Psoas muscle (tissue), 8 donors: ENCODE measurements at regions of chr12 and their contacts with region 1.

Region 1: DNA sequence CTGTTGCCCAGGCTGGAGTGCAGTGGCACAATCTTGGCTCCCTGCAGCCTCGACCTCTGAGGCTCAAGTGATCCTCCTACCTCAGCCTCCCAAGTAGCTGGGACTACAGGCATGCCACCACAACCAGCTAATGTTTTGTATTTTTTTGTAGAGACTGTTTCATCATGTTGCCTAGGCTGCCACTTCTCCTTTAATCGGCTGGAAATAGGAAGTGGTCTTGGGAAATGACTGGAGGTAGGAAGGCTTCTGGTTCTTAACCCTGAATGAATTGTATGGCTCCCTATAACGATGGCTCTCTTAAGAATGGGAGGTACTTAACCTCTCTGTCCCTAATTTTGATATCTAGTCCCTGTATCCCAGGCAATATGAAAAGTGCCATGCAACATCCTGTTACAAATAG is 113.9 kb upstream of the USP15 start:
- DNase-seq: no peak
- ATAC-seq: no peak
- H3K4me3 ChIP-seq: no peak overlapping the region
- H3K27ac ChIP-seq: no peak overlapping the region
- H3K4me1 ChIP-seq: no peaks in the 10 kb centered on the region
- H3K27me3 ChIP-seq: no peaks in the 10 kb centered on the region
- CTCF ChIP-seq: no peak

Region 2: DNA sequence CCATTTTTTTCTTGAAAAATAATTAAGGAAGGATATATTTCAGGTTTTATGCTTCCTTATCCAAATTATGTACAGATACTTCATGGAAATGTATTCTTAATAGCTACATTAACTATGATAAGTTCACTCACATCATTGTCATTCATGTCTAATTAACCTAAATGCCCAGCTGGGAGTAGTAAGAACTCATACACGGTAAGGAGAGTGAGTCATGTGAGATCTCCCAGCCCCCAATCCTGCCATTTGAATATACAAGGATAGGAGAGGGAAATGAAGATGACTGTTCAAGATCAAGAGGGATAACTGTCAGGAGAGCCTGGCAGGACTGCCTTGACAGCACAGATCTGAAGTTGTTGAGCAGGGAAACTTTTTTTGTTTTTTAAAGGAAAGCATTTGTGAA is 229.5 kb before region 1 on chr12:
- intact Hi-C with region 1: no loop called
- DNase-seq: no peak
- ATAC-seq: no peak
- H3K4me3 ChIP-seq: no peak overlapping the region
- H3K27ac ChIP-seq: no peak overlapping the region
- H3K4me1 ChIP-seq: no peaks in the 10 kb centered on the region
- H3K27me3 ChIP-seq: no peaks in the 10 kb centered on the region
- CTCF ChIP-seq: no peak

Region 3: GRCh38 chr12:62021811-62022210 is 124.5 kb before region 1 on chr12:
- intact Hi-C with region 1: no loop called
- DNase-seq: no peak
- ATAC-seq: no peak
- H3K4me3 ChIP-seq: no peak overlapping the region
- H3K27ac ChIP-seq: no peak overlapping the region
- H3K4me1 ChIP-seq: no peaks in the 10 kb centered on the region
- H3K27me3 ChIP-seq: no peaks in the 10 kb centered on the region
- CTCF ChIP-seq: no peak

Region 4: DNA sequence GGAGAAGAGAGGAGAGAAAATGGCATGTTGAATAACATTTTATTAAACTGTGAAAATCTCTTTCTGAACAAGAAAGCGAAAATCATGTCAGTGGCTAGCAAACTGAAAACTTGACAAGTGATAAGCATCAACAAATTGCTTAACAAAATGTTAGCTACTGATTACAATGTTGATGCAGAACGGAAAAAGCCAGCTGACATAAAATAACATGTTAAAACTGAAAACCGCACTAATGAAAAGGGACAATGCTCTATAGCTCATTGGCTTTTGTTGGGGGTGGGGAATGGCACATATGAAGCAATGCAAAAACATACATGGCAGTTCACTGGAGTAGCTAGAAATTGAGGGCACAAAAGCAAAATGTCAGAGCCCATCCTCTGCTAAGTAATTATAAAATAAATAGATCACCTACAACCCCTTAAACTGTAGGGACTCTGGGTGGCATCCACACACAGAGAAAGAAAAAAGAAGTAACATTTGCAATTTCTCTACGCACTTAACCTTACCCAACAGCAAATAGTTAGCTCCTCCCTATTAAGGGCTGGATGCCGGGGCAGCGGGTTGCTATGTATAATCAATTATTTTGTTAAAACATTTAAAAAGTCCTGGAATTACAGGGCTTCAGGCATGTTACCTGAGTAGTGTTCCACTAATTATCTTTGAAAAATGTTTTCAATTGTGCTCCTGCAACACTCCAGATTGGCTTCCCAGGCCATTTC is 15.3 kb before region 1 on chr12:
- intact Hi-C with region 1: loop called in 1 of 2 experiments (anchors 1 kb)
- DNase-seq: no peak
- ATAC-seq: no peak
- H3K4me3 ChIP-seq: no peak overlapping the region
- H3K27ac ChIP-seq: no peak overlapping the region
- H3K4me1 ChIP-seq: no peaks in the 10 kb centered on the region
- H3K27me3 ChIP-seq: no peaks in the 10 kb centered on the region
- CTCF ChIP-seq: no peak

Region 5: DNA sequence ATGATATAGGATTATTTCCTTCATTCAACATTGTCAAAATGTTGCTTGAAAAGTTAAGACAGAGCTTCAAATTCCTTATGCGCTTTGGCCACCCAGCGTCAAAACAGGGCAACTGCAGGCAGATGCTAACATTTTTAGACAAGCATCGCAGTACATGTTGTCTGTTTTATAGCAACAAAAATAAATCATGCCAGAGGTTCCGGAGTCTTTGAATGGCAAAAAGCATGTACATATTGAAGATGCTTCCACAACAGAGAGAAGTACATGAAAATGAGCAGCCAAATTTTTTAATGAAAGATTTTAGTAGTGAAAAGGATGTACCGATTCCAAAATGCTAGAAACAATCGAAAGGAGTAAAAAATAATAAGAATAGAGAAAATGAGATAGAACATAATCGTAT is 64.1 kb after region 1 on chr12:
- intact Hi-C with region 1: no loop called
- DNase-seq: peak; percentile 18 to 52
- ATAC-seq: peak in 1 of 4 donors; percentile 52
- H3K4me3 ChIP-seq: no peak overlapping the region
- H3K27ac ChIP-seq: no peak overlapping the region
- H3K4me1 ChIP-seq: no peaks in the 10 kb centered on the region
- H3K27me3 ChIP-seq: peaks cover 0 to 2% (median 0%) of the 10 kb centered on the region in 3 donors
- CTCF ChIP-seq: peak; percentile 71